A673 (cell line): ENCODE measurements at regions of chr9 and their contacts with region 1.

Region 1: DNA sequence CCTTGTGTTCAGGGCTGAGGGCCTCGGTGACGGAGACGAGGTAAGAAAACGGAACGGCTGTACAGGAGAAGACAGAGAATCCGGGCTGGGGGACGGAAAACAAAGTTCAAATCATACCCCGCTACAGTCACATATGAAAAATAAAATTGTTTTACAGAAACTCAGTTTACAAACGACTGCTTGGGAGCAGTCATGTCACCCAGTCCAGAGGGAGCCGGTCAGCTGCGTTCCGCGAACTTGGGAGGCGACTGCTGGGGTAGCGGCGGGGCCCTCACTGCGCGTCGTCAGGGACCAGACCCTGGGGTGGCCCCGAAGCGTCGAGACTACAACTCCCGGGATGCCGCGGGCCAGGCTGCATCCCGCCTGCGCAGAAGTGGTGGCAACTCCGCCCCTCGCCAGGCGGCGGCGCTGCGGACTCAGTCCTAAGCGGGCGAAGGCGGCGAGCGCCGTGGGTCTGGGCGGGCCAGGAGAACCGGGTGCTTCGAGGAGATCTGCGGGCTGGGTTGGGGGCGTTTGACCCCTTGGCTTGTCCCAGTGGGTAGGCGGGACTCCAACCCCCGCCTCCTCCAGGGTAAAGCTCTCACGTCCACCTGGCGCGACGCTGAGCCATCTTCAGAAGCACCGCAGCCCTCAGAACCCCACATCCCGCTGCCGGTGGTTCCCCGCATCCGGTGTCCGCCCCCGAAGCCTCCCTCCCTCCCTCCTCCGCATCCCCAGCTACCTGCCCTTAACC is 4.0 kb downstream of the SIT1 start:
- DNase-seq: peak; percentile 94
- H3K4me3 ChIP-seq: peak overlapping the region; percentile 52
- H3K27ac ChIP-seq: peak overlapping the region; percentile 64
- H3K4me1 ChIP-seq: peaks cover 4% of the 10 kb centered on the region
- H3K27me3 ChIP-seq: no peaks in the 10 kb centered on the region
- CTCF ChIP-seq: peak; percentile 95

Region 2: GRCh38 chr9:35593581-35593980 is 53.1 kb before region 1 on chr9:
- CTCF ChIA-PET with region 1: no interaction called
- POLR2A ChIA-PET with region 1: no interaction called
- intact Hi-C with region 1: no loop called
- DNase-seq: no peak
- H3K4me3 ChIP-seq: no peak overlapping the region
- H3K27ac ChIP-seq: no peak overlapping the region
- H3K4me1 ChIP-seq: no peaks in the 10 kb centered on the region
- H3K27me3 ChIP-seq: no peaks in the 10 kb centered on the region
- CTCF ChIP-seq: no peak

Region 3: DNA sequence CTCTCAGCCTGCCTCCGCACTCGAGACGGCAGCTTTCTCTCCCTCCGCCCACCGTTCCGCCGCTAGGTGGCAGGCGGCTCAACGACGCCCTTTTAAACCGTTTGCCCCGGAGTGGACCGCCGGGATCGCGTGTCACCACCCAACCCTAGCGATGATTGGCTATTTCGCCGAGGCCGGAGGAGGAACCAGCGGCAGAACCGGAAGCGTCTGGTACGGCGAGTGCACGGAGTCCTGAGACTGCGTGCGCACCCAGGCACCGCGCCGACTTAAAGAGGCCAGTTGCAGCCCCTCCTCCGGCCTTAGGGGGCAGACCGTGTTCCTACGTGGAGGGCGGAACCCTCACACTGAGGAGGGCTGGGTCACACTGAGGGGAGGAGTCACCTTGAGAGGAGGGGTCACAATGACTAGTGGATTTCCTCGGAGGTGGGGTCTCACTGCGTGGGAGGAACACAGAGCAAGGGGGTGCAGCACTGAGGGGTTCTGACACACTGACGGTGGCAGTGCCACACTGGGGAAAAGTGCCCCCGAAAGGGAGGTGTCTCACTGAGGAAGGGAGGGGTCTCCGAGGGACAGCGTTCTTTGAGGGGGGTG is 42.6 kb before region 1 on chr9:
- CTCF ChIA-PET with region 1: interaction called, 4 read pairs
- POLR2A ChIA-PET with region 1: no interaction called
- intact Hi-C with region 1: loop called (anchors 5 kb)
- DNase-seq: peak; percentile 100
- H3K4me3 ChIP-seq: peak overlapping the region; percentile 79
- H3K27ac ChIP-seq: peak overlapping the region; percentile 79
- H3K4me1 ChIP-seq: no peaks in the 10 kb centered on the region
- H3K27me3 ChIP-seq: no peaks in the 10 kb centered on the region
- CTCF ChIP-seq: peak; percentile 99

Region 4: GRCh38 chr9:35619800-35620158 is 26.9 kb before region 1 on chr9:
- CTCF ChIA-PET with region 1: no interaction called
- POLR2A ChIA-PET with region 1: interaction called, 10 read pairs
- intact Hi-C with region 1: no loop called
- DNase-seq: no peak
- H3K4me3 ChIP-seq: no peak overlapping the region
- H3K27ac ChIP-seq: no peak overlapping the region
- H3K4me1 ChIP-seq: no peaks in the 10 kb centered on the region
- H3K27me3 ChIP-seq: peaks cover 26% of the 10 kb centered on the region
- CTCF ChIP-seq: no peak

Region 5: GRCh38 chr9:35657546-35658136 is 10.9 kb after region 1 on chr9 and contains the start of gene RMRP:
- CTCF ChIA-PET with region 1: no interaction called
- POLR2A ChIA-PET with region 1: interaction called, 5 read pairs
- intact Hi-C with region 1: loop called (anchors 1 kb)
- DNase-seq: peak; percentile 100
- H3K4me3 ChIP-seq: peak within 1 kb of the TSS; percentile 74
- H3K27ac ChIP-seq: peak within 1 kb of the TSS; percentile 97
- H3K4me1 ChIP-seq: peaks cover 11% of the 10 kb centered on the region
- H3K27me3 ChIP-seq: no peaks in the 10 kb centered on the region
- CTCF ChIP-seq: peak; percentile 30; the same call in 1 of the 2 replicates
- total RNA-seq, gene RMRP: 13,531 and 14,573 TPM in 2 replicates